Heart right ventricle (tissue), 16 donors: ENCODE measurements at regions of chr3 and their contacts with region 1.

Region 1: DNA sequence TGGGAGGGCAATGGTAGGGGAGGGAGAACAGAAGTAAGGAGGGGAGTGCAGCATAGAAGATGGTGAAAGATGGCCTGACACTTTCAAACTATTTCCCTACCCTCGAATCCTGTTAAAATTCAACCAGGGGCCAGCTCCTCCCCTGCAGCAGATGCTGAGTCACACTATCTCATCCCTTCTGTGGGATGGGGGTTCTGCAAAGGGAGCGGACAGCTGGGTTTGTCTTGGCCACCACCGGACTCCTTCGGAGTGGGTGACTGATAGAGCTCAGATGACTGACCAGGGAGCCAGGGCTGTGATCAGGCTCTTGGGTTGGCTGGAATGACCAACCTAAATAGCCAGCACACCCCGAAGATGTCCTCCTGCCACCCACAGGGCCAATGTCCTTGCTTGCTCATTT is 33.6 kb upstream of the TMCC1 start:
- DNase-seq: no peak
- ATAC-seq: no peak
- H3K4me3 ChIP-seq: no peak overlapping the region
- H3K27ac ChIP-seq: no peak overlapping the region
- H3K4me1 ChIP-seq: no peaks in the 10 kb centered on the region
- H3K27me3 ChIP-seq: peaks cover 0 to 7% (median 0%) of the 10 kb centered on the region in 7 donors
- CTCF ChIP-seq: no peak

Region 2: DNA sequence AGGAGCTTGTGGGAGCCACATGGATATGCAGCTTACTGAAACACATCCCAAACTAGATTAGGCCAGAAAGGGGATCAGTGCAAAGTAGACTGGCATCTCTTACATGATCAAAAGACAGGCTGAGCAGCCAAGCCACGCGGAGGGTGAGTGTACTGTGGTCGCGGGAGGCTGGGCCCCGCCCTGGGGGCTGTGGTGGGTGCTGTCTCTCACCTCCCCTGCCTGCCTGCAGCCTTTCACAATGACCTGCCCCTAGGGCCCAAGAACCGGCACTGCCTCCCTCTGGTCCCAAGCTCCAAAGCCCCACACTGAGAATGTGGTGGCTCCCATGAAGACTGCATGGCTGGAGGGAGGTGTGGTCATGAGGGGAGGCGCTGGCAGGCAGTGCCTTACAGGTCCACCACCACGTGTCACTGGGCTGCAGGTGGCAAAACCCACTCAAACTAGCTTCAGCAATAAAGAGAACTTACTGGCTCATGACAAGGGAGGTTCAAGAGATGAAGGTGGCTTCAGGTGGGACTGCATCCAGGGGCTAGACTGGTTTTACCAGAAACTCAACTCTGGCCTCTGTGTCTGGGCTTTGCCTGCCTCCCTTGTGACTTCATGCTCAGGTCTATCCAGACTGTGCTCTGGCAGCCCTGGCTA is 293.2 kb before region 1 on chr3:
- intact Hi-C with region 1: loop called in 7 of 10 experiments (anchors 2 to 10 kb)
- DNase-seq: no peak
- ATAC-seq: peak in 1 of 8 donors; percentile 7
- H3K4me3 ChIP-seq: no peak overlapping the region
- H3K27ac ChIP-seq: no peak overlapping the region
- H3K4me1 ChIP-seq: peaks cover 0 to 2% (median 0%) of the 10 kb centered on the region in 9 donors
- H3K27me3 ChIP-seq: no peaks in the 10 kb centered on the region
- CTCF ChIP-seq: no peak